ENCODE measurements at regions of chr10 and their contacts with region 1.

Region 1: GRCh38 chr10:123655751-123656150 is 10.4 kb upstream of the GPR26 start:
- DNase-seq: peak in 1 of 2 experiments; percentile 71
- H3K4me3 ChIP-seq: no peak overlapping the region
- H3K27ac ChIP-seq: no peak overlapping the region
- H3K4me1 ChIP-seq: peaks cover 0 to 4% (median 3%) of the 10 kb centered on the region in 4 experiments; a peak in 5 of 7 replicates
- H3K27me3 ChIP-seq: no peaks in the 10 kb centered on the region; a peak in 1 of 7 replicates
- CTCF ChIP-seq: peak; percentile 63 to 81 (median 72)
- EP300 ChIP-seq: no peak
- POLR2A ChIP-seq: no peak
- RAD21 ChIP-seq: peak; percentile 83 to 92

Region 2: GRCh38 chr10:123642293-123642692 is 13.5 kb before region 1 on chr10:
- CTCF ChIA-PET with region 1: interaction called, 58 read pairs
- POLR2A ChIA-PET with region 1: interaction called, 3 read pairs
- DNase-seq: no peak
- H3K4me3 ChIP-seq: no peak overlapping the region
- H3K27ac ChIP-seq: no peak overlapping the region
- H3K4me1 ChIP-seq: peaks cover 5 to 25% (median 13%) of the 10 kb centered on the region in 4 experiments
- H3K27me3 ChIP-seq: no peaks in the 10 kb centered on the region; a peak in 1 of 7 replicates
- CTCF ChIP-seq: peak in 1 of 3 experiments; percentile 1; a peak in 1 of 4 replicates
- EP300 ChIP-seq: no peak
- POLR2A ChIP-seq: no peak
- RAD21 ChIP-seq: peak in 1 of 2 experiments; percentile 21; a peak in 2 of 4 replicates

Region 3: DNA sequence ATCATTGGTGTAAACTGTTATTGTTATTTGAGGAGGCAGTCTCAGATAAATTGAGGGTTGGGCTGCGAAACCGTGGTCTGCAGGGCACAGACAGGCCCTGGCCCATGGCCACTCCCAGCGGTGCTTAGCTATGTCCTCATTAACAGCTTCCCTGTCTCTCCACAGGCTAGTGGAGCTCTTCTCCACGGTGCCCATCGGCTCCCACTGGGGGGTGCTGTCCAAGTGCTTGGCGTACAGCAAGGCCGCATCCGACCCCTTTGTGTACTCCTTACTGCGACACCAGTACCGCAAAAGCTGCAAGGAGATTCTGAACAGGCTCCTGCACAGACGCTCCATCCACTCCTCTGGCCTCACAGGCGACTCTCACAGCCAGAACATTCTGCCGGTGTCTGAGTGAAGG is 32.0 kb after region 1 on chr10:
- CTCF ChIA-PET with region 1: interaction called, 12 read pairs
- POLR2A ChIA-PET with region 1: no interaction called
- DNase-seq: no peak
- H3K4me3 ChIP-seq: no peak overlapping the region
- H3K27ac ChIP-seq: no peak overlapping the region
- H3K4me1 ChIP-seq: no peaks in the 10 kb centered on the region
- H3K27me3 ChIP-seq: no peaks in the 10 kb centered on the region
- CTCF ChIP-seq: peak; percentile 39 to 42 (median 41)
- EP300 ChIP-seq: no peak
- POLR2A ChIP-seq: no peak
- RAD21 ChIP-seq: peak; percentile 33 to 58

Region 4: DNA sequence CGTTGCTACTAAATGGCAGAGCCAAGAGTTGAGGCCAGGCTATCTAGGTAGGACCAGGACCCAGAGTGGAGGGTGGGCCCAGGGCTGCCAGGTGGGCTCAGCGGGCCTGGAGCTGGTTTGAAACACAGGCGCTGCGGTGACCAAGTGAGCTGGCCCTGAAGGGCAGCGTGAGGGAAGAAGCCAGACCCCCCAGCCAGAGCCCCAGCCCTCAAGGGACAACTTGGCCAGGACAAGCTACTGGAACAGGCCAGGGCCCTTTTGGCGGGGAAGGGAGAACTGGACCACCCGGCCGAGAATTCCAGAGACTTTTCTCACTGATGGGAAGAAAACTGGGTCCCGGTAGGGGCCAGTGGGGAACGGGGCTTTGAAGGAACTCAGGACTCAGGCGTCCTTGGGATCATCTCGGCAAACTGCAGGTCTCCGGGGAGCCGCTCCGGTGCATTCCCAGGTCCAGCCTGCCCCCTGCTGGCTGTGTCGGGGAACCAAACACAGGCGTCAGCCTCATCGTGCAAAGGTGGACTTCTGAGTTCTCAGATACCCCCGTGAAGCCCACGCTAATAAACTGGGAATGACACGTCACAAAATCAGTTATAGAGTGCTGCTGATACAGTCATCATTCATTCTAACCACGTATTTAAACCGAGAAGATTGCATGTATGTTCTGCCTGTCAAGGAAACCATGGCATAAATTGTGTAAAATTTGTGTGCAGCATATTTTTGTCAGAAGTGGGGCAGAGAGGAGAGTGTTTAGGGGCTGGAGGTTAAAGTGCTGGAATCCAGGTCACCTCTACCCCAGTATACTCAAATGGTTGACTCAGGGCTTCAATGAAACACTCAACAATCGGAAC is 311.9 kb after region 1 on chr10:
- CTCF ChIA-PET with region 1: interaction called, 10 read pairs
- POLR2A ChIA-PET with region 1: no interaction called
- DNase-seq: peak; percentile 63 to 95
- H3K4me3 ChIP-seq: no peak overlapping the region
- H3K27ac ChIP-seq: no peak overlapping the region
- H3K4me1 ChIP-seq: peaks cover 2 to 20% (median 8%) of the 10 kb centered on the region in 4 experiments
- H3K27me3 ChIP-seq: peaks cover 0 to 8% (median 5%) of the 10 kb centered on the region in 4 experiments; a peak in 3 of 7 replicates
- CTCF ChIP-seq: peak; percentile 89 to 95 (median 91)
- EP300 ChIP-seq: no peak
- POLR2A ChIP-seq: no peak
- RAD21 ChIP-seq: peak; percentile 99

Measured in H1 (cell line).